RWPE1 (cell line): ENCODE measurements at regions of chr7 and their contacts with region 1.

Region 1: DNA sequence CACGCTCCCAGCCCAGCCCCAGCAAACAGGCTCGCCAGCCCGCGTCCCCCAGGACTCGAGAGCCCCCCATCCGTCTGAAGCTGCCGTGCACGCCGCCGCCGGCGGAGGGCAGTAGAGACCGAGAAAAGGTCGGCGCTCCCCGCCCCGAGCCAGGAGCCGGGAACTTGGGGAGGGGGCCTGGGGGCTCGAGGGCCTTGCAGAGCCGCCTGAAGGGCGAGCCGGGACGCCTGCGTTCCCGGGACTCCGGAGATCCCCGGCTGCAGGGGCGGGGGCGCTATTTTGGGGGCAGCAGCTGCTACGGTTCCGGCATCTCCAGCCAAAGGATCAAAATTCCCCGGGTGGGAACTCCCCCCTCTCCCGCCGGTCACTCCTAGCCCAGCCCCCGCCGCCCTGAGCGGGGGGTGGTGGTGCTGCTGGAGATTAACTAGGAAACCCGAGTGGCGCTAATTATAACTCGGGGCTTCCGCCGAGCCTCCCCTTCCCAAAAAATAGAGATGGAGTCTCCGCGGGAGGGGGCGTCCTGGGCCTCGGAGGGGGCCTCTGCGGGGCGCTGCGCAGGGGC is 747 bp downstream of the ACHE start:
- DNase-seq: no peak
- H3K27ac ChIP-seq: no peak overlapping the region
- CTCF ChIP-seq: peak; percentile 95

Region 2: DNA sequence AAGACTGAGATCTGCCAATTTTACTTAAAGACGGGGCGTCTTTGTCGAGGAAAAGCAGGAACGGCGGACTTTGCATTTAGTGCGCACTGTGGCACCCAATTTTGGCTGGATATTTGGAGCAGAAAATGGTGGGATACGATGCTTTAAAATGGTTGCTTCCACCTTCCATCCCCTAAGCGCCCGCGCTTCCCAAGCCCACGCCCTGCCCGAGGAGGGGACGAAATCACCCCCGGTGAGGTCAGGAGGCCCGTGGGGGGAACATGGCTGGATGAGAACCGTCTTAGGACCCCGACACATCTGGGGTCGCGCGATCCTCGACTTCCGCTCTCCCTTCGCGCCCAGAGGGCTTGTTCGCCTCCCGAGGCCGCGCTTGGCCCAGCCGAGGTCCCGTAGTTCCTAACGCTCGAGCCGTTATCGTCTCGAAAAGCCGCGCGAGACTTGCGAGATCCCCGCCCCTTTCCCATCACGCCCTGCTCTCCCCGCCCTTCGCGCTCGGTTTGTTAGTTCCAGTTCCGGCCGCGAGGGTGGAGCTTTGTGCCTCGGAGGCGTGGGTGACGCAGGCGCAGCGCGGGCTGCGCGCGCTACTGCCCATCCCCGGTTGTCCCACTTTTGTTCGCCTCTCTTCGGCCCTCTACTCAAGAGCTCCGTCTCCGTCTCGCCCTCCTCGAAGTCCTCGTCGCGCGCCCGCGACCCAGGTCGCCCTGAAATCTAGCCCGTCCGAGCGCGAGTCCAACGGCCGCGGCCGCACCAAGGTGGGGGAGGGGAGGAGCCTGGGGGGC is 20.2 kb before region 1 on chr7 and contains the start of gene SRRT:
- CTCF ChIA-PET with region 1: interaction called, 4 read pairs
- POLR2A ChIA-PET with region 1: interaction called, 15 read pairs
- DNase-seq: peak; percentile 97
- H3K27ac ChIP-seq: peak within 1 kb of the TSS; percentile 100
- CTCF ChIP-seq: no peak

Region 3: GRCh38 chr7:101058355-101058754 is 163.4 kb after region 1 on chr7:
- CTCF ChIA-PET with region 1: interaction called, 19 read pairs
- POLR2A ChIA-PET with region 1: no interaction called
- DNase-seq: peak; percentile 60
- H3K27ac ChIP-seq: no peak overlapping the region
- CTCF ChIP-seq: no peak

Region 4: DNA sequence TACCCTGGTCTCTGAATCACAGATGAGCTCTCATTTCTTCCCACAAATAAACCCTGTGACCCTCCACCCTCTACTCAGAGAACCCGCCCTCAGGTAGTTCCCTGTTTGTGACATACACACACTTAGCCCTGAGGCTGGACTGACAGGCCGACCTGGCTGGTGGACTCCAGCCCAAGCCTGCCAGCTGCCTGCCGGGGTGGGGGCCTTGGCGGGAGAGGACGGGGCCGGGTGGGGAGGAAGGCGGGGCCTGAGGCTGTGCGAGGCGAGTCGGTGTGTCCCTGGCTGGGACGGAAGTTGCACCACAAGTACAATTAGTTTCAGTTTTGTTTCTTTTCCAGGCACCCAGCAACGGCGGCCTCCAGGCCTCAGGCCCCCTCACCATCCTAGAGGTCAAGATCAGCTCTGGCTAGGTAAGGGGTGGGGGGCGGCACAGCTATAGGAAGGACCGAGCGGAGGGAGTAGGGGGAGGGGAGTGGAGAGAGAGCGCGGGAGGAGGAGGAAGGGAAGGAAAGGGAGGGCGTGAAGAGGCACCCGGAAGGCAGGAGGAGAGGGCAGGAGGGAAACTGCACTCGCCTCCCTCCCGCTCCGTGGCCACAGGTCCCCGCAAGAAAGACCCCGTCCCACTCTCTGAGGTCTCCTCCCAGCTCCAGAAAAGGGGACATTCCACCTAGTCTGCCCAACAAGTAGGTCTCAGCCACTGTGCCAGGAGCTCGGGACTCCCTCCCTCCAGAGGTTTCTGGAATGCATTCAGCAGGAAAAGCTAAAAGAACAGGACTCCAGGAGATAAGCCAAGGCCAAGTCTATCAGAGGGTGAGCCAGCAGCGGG is 190.4 kb after region 1 on chr7 and contains the start of gene TRIM56:
- CTCF ChIA-PET with region 1: interaction called, 10 read pairs
- POLR2A ChIA-PET with region 1: no interaction called
- DNase-seq: peak; percentile 96
- H3K27ac ChIP-seq: peak within 1 kb of the TSS; percentile 99
- CTCF ChIP-seq: no peak

Region 5: GRCh38 chr7:101244375-101245146 is 349.6 kb after region 1 on chr7 and contains the start of gene FIS1:
- CTCF ChIA-PET with region 1: interaction called, 11 read pairs
- POLR2A ChIA-PET with region 1: no interaction called
- DNase-seq: peak; percentile 85
- H3K27ac ChIP-seq: peak within 1 kb of the TSS; percentile 90
- CTCF ChIP-seq: peak; percentile 98